ENCODE measurements at regions of chr14 and their contacts with region 1.

Region 1: DNA sequence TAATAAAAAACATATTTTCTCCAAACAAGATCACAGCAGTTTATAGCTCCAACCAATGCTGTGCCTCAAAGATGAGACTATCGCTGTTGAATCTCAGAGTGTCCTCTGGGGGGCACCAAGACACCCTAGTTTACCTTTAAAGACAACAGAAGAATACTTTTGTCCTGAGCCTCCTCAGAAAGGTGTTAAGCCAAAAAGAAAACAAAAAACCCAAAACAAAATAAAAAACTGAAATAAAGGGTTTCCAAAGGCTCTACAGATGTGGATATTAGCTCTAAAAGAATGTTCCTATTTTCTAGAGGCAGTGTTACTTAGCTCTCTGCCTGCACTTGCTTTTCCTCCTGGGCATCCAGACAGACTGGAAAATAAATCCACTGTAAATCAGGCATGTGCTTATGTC is 86.9 kb upstream of the TTC7B start:
- DNase-seq: peak; percentile 74
- H3K4me3 ChIP-seq: no peak overlapping the region
- H3K27ac ChIP-seq: no peak overlapping the region
- H3K4me1 ChIP-seq: no peaks in the 10 kb centered on the region
- H3K27me3 ChIP-seq: no peaks in the 10 kb centered on the region
- CTCF ChIP-seq: peak; percentile 60

Region 2: GRCh38 chr14:91286530-91286937 is 383.4 kb after region 1 on chr14:
- intact Hi-C with region 1: loop called (anchors 10 kb)
- DNase-seq: peak; percentile 85
- H3K4me3 ChIP-seq: no peak overlapping the region
- H3K27ac ChIP-seq: no peak overlapping the region
- H3K4me1 ChIP-seq: no peaks in the 10 kb centered on the region
- H3K27me3 ChIP-seq: no peaks in the 10 kb centered on the region
- CTCF ChIP-seq: peak; percentile 85

Measured in colonic mucosa (tissue), 4 donors.